Left cardiac atrium (tissue), 4 donors: ENCODE measurements at regions of chr10 and their contacts with region 1.

Region 1: GRCh38 chr10:62816331-62817120 is at the start of gene EGR2:
- DNase-seq: peak; percentile 95
- ATAC-seq: peak; percentile 87 to 88
- total RNA-seq, gene EGR2: 2.3 to 4.4 TPM

Region 2: DNA sequence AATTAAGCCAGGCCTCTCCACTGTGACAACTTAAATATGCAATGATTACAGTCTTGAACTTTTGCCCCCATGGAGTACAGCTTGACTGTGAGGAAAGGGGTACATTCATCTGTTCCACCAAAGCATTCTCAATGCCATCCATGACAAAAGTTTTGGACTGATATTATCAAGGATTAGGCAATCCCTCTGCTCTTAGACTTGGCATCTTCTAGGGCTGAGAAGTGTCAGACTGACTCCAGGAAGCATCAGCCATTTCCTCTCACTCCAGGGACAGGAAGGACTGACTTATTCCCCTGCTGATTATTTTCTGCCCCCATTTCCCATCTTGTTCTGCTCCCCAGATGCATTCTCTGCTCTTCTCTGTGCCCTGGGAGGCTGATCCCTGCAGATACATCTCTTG is 372.7 kb before region 1 on chr10:
- intact Hi-C with region 1: loop called in 1 of 2 experiments (anchors 10 kb)
- DNase-seq: no peak
- ATAC-seq: peak; percentile 29 to 83

Region 3: DNA sequence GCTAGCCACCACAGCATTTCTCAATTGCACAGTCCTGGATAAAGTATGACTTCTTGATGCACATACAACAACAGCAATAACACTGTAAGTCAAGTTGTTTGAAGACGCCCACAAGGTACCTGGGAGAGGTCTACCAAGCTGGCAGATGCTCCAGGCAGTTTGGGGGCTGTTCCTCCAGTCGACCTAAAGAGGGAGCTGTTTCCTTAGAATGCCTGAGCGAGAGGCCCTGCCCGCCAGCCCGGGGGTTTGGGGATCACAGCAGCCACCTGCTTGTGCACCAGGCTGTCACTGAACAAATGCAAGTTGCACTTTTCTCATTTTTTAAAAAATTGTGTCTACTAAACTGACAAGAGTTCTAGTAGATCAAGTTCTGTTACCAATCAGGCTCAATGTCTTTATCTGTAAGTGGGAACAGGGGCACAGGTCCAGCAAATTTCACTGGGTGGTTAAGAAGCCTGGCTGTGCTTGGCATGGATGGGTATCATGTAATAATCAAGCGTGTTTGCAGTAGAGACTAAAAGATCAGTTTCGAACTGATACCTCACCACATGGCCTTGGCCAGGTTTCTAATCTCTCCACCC is 205.8 kb before region 1 on chr10:
- intact Hi-C with region 1: loop called (anchors 2 to 10 kb)
- DNase-seq: peak; percentile 43
- ATAC-seq: peak; percentile 76 to 86

Region 4: DNA sequence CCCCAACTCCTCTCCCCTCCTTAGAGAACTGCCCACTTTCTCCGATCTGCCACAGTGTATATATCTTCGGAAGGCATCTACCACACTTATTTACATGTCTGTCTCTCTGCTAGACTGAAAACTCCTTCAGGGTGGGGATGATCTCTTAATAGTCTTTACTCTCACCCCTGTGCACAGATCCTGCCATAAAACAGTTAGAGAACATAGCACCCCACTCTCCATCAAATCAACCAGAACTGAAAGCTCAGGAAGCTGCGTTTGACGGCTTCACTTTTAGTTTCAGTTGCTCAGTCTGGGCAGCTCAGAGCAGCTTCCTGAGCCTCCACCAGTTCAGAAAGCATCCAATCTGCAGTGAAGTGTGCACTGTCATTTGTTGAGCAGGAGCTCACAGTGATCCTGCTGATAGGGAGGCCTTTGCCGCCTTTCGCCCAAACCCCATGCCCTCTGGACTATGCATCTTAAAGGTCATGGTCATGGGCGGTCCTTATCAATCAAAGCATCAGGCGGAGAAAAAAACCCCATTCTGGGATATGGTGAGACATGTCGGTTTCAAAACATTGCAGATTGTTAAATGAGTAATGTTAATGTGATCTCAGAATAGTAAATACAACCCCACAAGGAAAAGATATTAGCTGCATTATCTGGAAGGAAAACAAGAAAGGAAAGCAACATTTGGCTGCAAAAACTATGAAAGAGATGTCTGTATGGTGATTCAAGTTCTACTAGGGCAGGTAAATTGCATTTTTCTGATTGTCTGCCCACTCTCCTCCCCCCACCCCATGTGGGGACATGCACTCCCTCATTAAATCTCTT is 179.1 kb before region 1 on chr10:
- intact Hi-C with region 1: loop called in 1 of 2 experiments (anchors 5 kb)
- DNase-seq: peak; percentile 24
- ATAC-seq: peak; percentile 66 to 82

Region 5: DNA sequence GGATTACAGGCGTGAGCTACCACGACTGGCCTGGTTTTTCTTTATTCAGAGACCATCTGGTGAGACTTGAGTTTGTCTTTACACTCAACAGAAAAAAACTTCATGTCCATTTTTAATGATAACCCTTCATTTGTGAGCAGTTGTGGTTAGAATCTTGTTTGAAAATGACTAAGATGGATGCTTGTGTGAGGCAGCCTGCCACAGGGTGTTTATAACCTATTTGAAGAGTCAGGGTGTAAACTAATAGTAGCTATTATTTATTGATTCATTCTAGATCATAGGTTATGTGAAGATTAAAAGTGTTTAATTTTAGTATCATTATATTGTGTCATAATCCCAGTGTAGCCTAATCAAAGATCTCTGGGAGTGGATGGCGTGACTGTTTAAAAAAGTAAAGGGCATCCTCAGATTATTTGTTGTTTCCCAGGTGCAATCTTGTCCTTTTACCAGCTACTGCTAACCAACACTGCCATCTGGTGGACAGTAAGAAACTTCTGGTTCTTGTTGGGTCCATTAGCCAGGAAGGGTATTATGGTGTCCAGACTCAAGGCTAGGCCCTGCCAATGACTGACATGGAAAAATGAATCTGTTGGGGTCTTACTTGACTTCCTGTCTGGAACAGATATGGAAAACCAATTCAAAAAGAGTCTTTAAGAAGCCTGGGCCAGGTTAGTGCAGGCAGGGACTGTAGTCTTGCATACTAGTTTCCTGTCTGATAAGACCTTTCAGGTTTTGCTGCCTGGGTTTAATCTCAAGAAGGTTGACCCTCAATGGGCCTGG is 341.5 kb after region 1 on chr10:
- intact Hi-C with region 1: loop called in 1 of 2 experiments (anchors 5 kb)
- DNase-seq: no peak
- ATAC-seq: peak; percentile 74 to 78